HEK293 (cell line): ENCODE measurements at regions of chr4 and their contacts with region 1.

Region 1: GRCh38 chr4:99949034-99949998 is 759 bp downstream of the H2AZ1 start:
- H3K4me3 ChIP-seq: peak overlapping the region; percentile 77
- H3K27ac ChIP-seq: peak overlapping the region; percentile 95
- H3K4me1 ChIP-seq: no peaks in the 10 kb centered on the region
- CTCF ChIP-seq: peak; percentile 62

Region 2: GRCh38 chr4:99875072-99875471 is 74.2 kb before region 1 on chr4:
- CTCF ChIA-PET with region 1: no interaction called
- POLR2A ChIA-PET with region 1: no interaction called
- H3K4me3 ChIP-seq: no peak overlapping the region
- H3K27ac ChIP-seq: no peak overlapping the region
- H3K4me1 ChIP-seq: no peaks in the 10 kb centered on the region
- CTCF ChIP-seq: no peak

Region 3: GRCh38 chr4:99968330-99968729 is 19.0 kb after region 1 on chr4:
- CTCF ChIA-PET with region 1: no interaction called
- POLR2A ChIA-PET with region 1: interaction called, 10 read pairs
- H3K4me3 ChIP-seq: no peak overlapping the region
- H3K27ac ChIP-seq: no peak overlapping the region
- H3K4me1 ChIP-seq: no peaks in the 10 kb centered on the region
- CTCF ChIP-seq: no peak

Region 4: GRCh38 chr4:100076743-100077142 is 127.4 kb after region 1 on chr4:
- CTCF ChIA-PET with region 1: no interaction called
- POLR2A ChIA-PET with region 1: interaction called, 11 read pairs
- H3K4me3 ChIP-seq: no peak overlapping the region
- H3K27ac ChIP-seq: no peak overlapping the region
- H3K4me1 ChIP-seq: no peaks in the 10 kb centered on the region
- CTCF ChIP-seq: no peak